ENCODE measurements at regions of chr1 and their contacts with region 1.

Region 1: GRCh38 chr1:216750012-216750627 is 26.9 kb upstream of the ESRRG start:
- DNase-seq: peak; percentile 72
- H3K4me3 Mint-ChIP-seq: no peak overlapping the region
- H3K27ac Mint-ChIP-seq: no peak overlapping the region
- H3K4me1 Mint-ChIP-seq: no peaks in the 10 kb centered on the region
- H3K27me3 Mint-ChIP-seq: peaks cover 6% of the 10 kb centered on the region
- CTCF ChIP-seq: peak; percentile 93

Region 2: DNA sequence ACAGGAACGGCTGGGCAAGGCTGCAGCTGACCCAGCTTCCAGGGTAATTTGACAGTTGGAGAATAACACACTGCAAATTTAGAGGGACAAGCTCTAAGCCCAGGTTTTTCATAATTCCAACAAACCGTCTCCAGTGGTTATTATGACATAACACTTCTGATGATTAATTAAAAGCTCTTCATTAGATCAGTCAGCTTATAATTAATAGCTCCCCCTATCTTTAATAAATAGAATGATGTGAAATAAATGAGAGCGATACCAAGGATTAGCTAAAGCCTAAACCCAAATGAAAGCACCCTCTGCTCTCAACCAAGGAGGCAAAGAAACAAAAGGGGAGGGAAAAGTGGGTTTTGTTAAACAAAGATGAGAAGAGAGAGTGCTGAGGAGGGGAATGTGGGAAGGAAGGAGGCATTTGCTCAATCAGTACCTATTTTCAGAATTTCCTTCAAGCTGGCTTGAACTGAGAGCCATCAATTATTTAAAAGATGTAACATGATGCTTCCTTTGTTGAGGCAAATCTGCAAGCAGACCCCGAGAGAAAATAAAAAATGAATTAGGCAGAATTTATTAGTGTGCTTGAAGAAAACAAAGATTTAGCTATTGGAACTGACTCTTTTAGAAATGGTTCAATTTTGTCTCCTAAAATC is 194.9 kb after region 1 on chr1:
- CTCF ChIA-PET with region 1: interaction called, 10 read pairs
- POLR2A ChIA-PET with region 1: no interaction called
- intact Hi-C with region 1: no loop called
- DNase-seq: no peak
- H3K4me3 Mint-ChIP-seq: no peak overlapping the region
- H3K27ac Mint-ChIP-seq: no peak overlapping the region
- H3K4me1 Mint-ChIP-seq: no peaks in the 10 kb centered on the region
- H3K27me3 Mint-ChIP-seq: no peaks in the 10 kb centered on the region
- CTCF ChIP-seq: no peak

Region 3: DNA sequence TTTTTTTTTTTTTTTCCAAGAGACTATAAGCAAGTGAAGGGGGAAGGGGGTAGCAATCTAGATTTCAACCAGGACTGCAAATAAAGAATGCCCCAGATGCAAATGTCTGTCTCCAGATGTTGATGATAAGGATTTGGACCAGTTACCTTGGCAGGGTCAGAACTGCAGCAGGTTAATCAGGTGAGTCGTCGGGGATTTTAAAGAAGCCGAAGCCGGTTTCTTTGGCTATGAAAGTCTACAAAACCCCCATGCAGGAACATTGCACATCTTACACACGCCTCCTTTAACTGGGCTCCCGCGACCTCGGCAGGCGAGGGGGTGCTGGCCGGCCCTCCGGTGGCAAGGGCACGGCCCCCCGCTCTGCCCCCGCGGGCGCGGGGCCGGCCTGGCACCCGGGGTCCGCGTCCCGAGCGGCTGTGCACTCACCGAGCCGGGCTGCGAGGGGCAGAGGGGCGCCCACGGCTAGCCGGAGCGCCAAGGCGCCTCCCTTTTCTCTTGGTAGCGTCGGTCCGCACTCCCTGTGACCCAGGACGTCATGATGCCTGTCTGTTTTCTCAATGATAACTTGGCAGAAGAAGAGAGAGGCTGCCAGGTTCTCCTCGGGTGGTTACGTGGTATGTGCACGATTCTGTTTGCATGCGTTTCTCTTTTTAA is 339.4 kb after region 1 on chr1:
- CTCF ChIA-PET with region 1: interaction called, 3 read pairs
- POLR2A ChIA-PET with region 1: no interaction called
- intact Hi-C with region 1: loop called (anchors 2 kb)
- DNase-seq: peak; percentile 73
- H3K4me3 Mint-ChIP-seq: peak overlapping the region; percentile 69
- H3K27ac Mint-ChIP-seq: no peak overlapping the region
- H3K4me1 Mint-ChIP-seq: peaks cover 11% of the 10 kb centered on the region
- H3K27me3 Mint-ChIP-seq: peaks cover 23% of the 10 kb centered on the region
- CTCF ChIP-seq: no peak

Region 4: GRCh38 chr1:217333939-217334338 is 583.8 kb after region 1 on chr1:
- CTCF ChIA-PET with region 1: interaction called, 18 read pairs
- POLR2A ChIA-PET with region 1: interaction called, 3 read pairs
- intact Hi-C with region 1: loop called (anchors 1 kb)
- DNase-seq: peak; percentile 79
- H3K4me3 Mint-ChIP-seq: no peak overlapping the region
- H3K27ac Mint-ChIP-seq: no peak overlapping the region
- H3K4me1 Mint-ChIP-seq: no peaks in the 10 kb centered on the region
- H3K27me3 Mint-ChIP-seq: peaks cover 5% of the 10 kb centered on the region
- CTCF ChIP-seq: peak; percentile 91

Region 5: GRCh38 chr1:217660353-217661062 is 910.4 kb after region 1 on chr1:
- CTCF ChIA-PET with region 1: interaction called, 22 read pairs
- POLR2A ChIA-PET with region 1: interaction called, 3 read pairs
- intact Hi-C with region 1: loop called (anchors 1 kb)
- DNase-seq: peak; percentile 97
- H3K4me3 Mint-ChIP-seq: no peak overlapping the region
- H3K27ac Mint-ChIP-seq: peak overlapping the region; percentile 52
- H3K4me1 Mint-ChIP-seq: peaks cover 25% of the 10 kb centered on the region
- H3K27me3 Mint-ChIP-seq: no peaks in the 10 kb centered on the region
- CTCF ChIP-seq: peak; percentile 70

Region 6: DNA sequence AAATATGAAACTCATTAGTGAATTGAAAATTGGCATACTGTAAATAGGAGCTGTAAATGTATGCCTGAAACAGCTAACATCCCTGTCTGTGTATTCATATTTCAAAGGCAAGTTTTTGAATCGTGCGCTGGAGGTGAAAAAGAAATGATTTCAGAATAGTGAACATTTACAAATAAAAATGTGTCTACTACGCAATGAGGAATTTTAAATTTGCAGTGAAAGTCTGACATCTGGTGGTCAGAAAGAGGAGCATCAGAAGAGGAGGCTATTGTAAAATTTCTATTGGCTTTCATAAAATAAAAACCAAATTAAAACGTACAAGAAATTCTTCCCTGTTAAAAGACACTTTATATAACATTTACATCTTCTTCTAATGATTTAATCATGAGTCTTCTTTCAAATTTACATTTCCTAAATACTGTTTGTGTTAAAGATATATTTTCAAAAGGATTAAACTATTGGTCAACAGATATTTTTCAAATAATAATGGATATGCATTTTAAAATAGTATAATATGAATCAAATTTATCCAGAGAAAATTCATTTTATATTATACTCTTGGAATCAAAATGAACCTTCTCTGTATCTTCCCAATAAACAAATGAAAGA is 1421.3 kb after region 1 on chr1:
- CTCF ChIA-PET with region 1: interaction called, 4 read pairs
- POLR2A ChIA-PET with region 1: interaction called, 3 read pairs
- intact Hi-C with region 1: loop called (anchors 1 kb)
- DNase-seq: peak; percentile 68
- H3K4me3 Mint-ChIP-seq: no peak overlapping the region
- H3K27ac Mint-ChIP-seq: no peak overlapping the region
- H3K4me1 Mint-ChIP-seq: peaks cover 4% of the 10 kb centered on the region
- H3K27me3 Mint-ChIP-seq: peaks cover 89% of the 10 kb centered on the region
- CTCF ChIP-seq: peak; percentile 95

Measured in MCF 10A (cell line).